Common myeloid progenitor, CD34-positive (primary cell): ENCODE measurements at regions of chr11 and their contacts with region 1.

Region 1: DNA sequence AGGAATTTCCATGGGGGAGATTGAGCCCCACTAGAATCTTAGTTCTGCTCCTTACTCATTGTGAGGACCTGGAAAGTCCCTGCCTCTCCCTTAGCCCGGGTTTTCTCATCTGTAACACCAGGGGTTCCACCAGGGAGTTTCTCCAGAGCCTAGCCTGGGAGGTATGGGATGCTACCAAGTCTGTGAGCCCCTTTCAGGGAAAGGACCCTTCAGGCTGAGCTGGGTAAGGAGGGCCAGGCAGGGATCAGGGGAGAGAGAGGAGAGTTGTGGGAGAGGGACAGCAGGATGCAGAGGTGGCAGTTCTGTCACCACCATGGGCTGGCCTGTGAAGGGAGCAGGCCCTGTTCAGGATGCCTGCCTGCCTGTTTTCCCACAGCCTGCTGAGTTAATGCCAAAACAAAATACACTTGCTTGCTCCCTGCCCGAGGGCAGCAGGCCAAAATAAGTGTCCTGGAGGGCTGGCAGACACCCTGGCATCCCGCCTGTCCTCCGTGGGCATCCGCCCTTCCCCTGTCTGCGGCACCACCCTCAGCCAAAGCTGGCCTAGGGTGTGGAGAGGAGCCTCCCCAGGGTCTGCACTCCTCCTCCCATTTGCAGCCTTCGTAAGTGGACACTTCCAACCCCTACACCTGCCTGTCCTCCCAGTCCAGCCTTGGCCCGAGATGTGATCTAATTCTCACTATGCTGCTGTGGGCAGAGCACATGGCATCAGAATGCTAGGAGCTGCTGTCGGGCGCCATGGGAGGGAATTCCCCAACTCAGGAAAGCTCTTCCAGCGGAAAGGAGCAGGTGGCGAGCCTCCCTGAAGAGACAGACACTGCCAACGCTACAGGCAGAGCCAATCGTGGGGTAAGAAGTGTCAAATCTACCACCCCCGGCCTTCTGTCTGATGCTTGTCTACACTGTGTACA is 5.9 kb upstream of the FCHSD2 start:
- DNase-seq: peak in 1 of 3 donors; percentile 42
- H3K4me3 ChIP-seq: no peak overlapping the region
- H3K27ac ChIP-seq: peak overlapping the region; percentile 29 to 50
- H3K4me1 ChIP-seq: peaks cover 37 to 97% (median 83%) of the 10 kb centered on the region in 4 experiments
- H3K27me3 ChIP-seq: no peaks in the 10 kb centered on the region

Region 2: GRCh38 chr11:73117071-73117470 is 31.0 kb before region 1 on chr11:
- CTCF ChIA-PET with region 1: no interaction called
- POLR2A ChIA-PET with region 1: no interaction called
- DNase-seq: no peak
- H3K4me3 ChIP-seq: no peak overlapping the region
- H3K27ac ChIP-seq: no peak overlapping the region
- H3K4me1 ChIP-seq: no peaks in the 10 kb centered on the region
- H3K27me3 ChIP-seq: no peaks in the 10 kb centered on the region

Region 3: GRCh38 chr11:73164803-73165540 is 16.9 kb after region 1 on chr11:
- CTCF ChIA-PET with region 1: interaction called, 36 read pairs
- POLR2A ChIA-PET with region 1: no interaction called
- DNase-seq: peak in 2 of 3 donors; percentile 50 to 63
- H3K4me3 ChIP-seq: no peak overlapping the region
- H3K27ac ChIP-seq: no peak overlapping the region
- H3K4me1 ChIP-seq: peaks cover 5 to 44% (median 17%) of the 10 kb centered on the region in 4 experiments
- H3K27me3 ChIP-seq: no peaks in the 10 kb centered on the region